ENCODE measurements at regions of chr12 and their contacts with region 1.

Region 1: DNA sequence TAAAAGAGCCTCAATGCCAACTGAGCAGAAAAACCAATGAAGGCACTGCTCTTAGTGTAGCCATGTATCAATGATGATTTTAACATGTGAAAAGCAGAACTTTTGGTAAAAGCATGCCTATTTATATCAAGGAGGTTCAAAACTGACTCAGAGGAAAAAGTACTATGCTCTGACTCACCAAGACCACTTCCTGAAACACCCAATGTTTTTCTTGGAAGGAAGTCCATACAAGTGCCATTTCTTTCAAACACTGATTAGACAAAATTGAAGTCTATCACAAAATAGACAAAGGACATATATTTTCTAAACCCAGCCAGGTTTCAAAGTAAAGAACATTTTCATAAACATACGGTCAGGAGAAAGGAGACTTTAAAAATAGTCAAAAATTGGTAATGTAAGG is 88.6 kb downstream of the EPS8 start:
- DNase-seq: no peak

Region 2: GRCh38 chr12:15599266-15600037 is 101.1 kb before region 1 on chr12:
- intact Hi-C with region 1: loop called (anchors 5 kb)
- DNase-seq: no peak

Region 3: DNA sequence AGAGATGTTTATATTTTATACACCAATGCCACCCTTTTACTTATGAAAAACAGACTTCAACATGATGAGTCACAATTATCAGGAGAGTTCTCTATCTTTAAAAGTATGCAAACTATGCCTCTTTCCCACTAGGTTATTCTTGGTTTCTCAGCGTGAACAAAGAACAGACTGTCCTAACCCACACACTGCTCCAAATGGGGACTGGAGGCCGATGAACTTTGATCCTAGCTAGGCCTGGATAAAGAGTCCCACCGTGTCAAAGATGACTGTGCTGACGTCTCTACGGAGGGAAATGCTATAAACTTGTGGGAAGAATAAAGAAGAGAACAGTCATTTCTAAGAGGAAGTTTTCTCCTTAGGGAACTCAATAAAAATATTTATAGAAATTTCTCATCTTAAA is 71.5 kb before region 1 on chr12:
- intact Hi-C with region 1: loop called (anchors 10 kb)
- DNase-seq: no peak

Region 4: GRCh38 chr12:16020031-16020430 is 319.4 kb after region 1 on chr12:
- intact Hi-C with region 1: no loop called
- DNase-seq: no peak

Measured in cardiac septum (tissue), 1 donor.